ENCODE measurements at regions of chr1 and their contacts with region 1.

Region 1: GRCh38 chr1:26472901-26473845 is 933 bp downstream of the HMGN2 start:
- DNase-seq: peak; percentile 96
- H3K4me3 ChIP-seq: peak overlapping the region; percentile 96
- H3K27ac ChIP-seq: peak overlapping the region; percentile 95
- H3K4me1 ChIP-seq: peaks cover 61% of the 10 kb centered on the region
- CTCF ChIP-seq: no peak

Region 2: DNA sequence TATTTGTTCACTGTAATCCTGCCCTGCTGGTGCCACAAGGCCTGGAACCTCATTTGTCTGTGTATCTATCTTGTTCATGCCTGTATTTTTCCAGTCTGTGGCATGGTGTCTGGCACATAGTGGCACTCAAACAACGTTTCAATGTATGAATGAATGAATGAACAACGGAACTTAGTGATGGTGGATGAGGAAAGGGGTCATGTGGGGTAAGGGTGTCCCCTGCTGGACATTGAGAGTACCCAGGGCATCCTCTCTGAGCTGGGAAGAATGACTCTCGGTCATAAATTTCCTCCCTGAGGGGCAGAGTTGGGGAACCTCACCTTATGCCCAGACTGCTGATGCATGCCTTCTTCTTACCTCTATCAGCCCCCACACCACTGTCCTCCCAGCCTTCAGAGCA is 81.7 kb before region 1 on chr1:
- CTCF ChIA-PET with region 1: no interaction called
- POLR2A ChIA-PET with region 1: no interaction called
- intact Hi-C with region 1: no loop called
- DNase-seq: peak; percentile 40
- H3K4me3 ChIP-seq: no peak overlapping the region
- H3K27ac ChIP-seq: no peak overlapping the region
- H3K4me1 ChIP-seq: no peaks in the 10 kb centered on the region
- CTCF ChIP-seq: peak; percentile 69

Region 3: GRCh38 chr1:26408604-26409003 is 64.6 kb before region 1 on chr1:
- CTCF ChIA-PET with region 1: no interaction called
- POLR2A ChIA-PET with region 1: no interaction called
- intact Hi-C with region 1: no loop called
- DNase-seq: peak; percentile 49
- H3K4me3 ChIP-seq: no peak overlapping the region
- H3K27ac ChIP-seq: no peak overlapping the region
- H3K4me1 ChIP-seq: peaks cover 15% of the 10 kb centered on the region
- CTCF ChIP-seq: no peak

Region 4: DNA sequence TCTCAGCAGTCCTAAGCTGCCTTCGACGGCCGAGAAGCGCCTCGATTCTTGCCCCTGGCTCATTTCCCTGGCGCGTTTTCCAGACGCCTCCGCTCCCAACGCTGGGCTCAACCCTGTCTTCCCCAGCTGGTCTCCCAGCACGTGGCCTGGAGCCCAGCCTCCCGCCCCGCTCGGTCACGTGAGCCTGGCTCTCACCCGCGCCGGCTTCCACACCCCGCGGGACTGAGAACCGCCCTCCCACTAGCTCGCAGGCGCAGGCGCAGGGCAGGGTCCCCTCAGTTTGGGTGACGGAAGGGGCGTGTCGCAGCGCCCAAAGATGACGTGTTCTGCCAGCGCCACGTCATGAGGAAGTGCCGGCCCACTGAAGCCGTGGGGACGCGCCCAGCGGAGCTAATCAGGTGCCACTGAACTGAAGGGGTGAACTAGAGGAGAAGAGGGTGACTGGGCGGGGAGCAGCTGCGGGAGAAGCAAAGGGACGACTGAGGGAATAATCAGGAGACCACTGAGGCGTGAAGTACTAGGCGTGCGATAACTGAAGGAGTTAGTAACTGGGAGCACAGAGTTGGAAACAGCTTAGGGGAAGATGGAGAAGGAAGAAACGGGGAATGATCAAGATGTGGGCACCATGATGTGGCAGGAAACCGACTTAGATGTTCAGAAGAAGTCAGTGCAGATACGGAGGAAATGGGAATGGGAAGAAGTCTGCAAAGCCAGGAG is 41.0 kb before region 1 on chr1 and contains the start of gene DHDDS:
- CTCF ChIA-PET with region 1: no interaction called
- POLR2A ChIA-PET with region 1: interaction called, 5 read pairs
- intact Hi-C with region 1: loop called (anchors 2 kb)
- DNase-seq: peak; percentile 98
- H3K4me3 ChIP-seq: peak within 1 kb of the TSS; percentile 89
- H3K27ac ChIP-seq: peak within 1 kb of the TSS; percentile 38
- H3K4me1 ChIP-seq: peaks cover 33% of the 10 kb centered on the region
- CTCF ChIP-seq: no peak
- total RNA-seq, gene DHDDS: 33.2 and 39.0 TPM in 2 replicates

Region 5: DNA sequence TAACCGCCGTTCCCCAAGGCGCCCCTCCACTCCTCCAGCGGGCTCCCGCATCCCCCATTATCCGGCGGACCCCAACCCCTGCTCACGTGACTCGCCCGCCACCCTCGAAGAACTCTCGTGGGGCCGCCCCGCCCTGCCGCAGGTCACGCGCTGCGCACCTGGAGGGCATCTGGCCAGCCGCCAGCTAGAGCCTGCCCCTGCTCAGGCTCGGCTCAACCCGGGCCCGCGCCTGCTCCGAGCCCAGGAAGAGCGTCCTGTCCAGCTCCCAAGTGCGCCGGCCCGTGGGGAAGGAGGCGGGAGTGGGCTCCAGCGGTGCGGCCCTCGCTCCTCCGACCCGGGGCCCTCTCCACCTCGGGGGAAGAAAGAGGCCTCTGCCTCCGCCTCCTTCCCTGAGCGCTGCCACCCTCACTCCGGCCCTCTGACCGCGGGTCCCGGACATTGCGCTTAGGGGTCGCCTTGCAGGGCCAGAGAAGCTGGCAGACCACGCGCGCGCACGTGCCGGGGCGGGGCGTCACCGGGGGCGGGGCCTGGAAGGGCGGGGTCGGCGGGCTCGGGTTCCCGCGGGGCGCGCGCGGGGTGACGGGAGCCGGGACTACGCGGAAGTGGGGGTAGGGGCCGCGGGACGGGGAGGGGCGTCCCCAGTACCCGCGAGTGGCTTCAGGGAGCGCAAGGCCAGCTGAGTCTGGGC is 27.5 kb after region 1 on chr1:
- CTCF ChIA-PET with region 1: no interaction called
- POLR2A ChIA-PET with region 1: interaction called, 5 read pairs
- intact Hi-C with region 1: loop called (anchors 1 kb)
- DNase-seq: peak; percentile 90
- H3K4me3 ChIP-seq: peak overlapping the region; percentile 75
- H3K27ac ChIP-seq: peak overlapping the region; percentile 84
- H3K4me1 ChIP-seq: peaks cover 25% of the 10 kb centered on the region
- CTCF ChIP-seq: peak; percentile 51; the same call in 1 of the 2 replicates

Region 6: GRCh38 chr1:26529655-26530409 is 56.7 kb after region 1 on chr1 and contains the start of gene RPS6KA1:
- CTCF ChIA-PET with region 1: no interaction called
- POLR2A ChIA-PET with region 1: no interaction called
- intact Hi-C with region 1: loop called (anchors 2 kb)
- DNase-seq: peak; percentile 81
- H3K4me3 ChIP-seq: peak within 1 kb of the TSS; percentile 93
- H3K27ac ChIP-seq: peak within 1 kb of the TSS; percentile 55
- H3K4me1 ChIP-seq: peaks cover 43% of the 10 kb centered on the region
- CTCF ChIP-seq: no peak
- total RNA-seq, gene RPS6KA1: 54.1 and 72.2 TPM in 2 replicates

Region 7: DNA sequence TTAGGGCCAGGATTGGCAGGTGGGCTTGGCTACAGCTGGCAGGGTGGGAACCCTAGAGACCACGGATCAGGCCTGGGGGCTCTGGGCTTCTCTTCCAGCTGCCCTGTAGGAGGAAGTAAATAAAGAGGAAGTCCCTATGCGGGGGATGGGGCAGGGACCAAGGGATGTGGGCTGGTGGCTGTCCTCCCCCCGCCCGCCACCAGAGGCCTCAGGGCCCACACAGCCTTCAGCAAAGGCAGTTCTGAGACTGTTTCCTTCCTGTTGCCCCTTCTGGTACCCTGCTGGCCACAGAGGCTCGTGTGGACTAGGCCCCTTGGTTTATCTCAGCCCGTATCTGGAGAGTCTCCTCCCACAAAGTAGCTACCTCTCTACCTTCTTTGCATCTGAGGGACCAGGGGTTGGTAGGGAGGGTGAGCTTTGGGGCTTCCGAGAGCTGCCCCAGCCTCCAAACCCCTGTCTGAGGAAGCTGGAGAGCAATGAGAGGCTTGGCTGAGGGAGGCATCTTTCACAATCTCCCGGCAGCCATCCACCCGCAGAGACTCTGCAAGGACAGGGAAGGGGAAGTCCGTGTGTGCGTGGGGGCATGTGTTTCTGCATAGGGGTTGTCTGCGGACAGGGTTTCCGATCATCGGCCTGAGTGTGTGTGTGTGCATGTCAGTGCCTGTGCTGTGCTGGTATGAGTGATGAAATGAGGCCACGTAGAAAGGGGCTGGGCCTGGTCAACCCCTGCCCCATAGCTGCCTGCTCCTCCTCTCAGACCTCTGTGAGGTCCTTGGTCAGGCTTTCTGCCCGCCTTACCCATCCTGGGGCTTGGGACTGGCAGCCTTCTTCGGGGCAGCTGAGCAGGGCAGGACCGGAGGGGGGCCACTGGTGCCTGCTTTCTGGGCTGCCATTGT is 68.9 kb after region 1 on chr1:
- CTCF ChIA-PET with region 1: no interaction called
- POLR2A ChIA-PET with region 1: no interaction called
- intact Hi-C with region 1: loop called (anchors 2 kb)
- DNase-seq: peak; percentile 95
- H3K4me3 ChIP-seq: peak overlapping the region; percentile 64
- H3K27ac ChIP-seq: peak overlapping the region; percentile 97
- H3K4me1 ChIP-seq: peaks cover 97% of the 10 kb centered on the region
- CTCF ChIP-seq: peak; percentile 72

Region 8: DNA sequence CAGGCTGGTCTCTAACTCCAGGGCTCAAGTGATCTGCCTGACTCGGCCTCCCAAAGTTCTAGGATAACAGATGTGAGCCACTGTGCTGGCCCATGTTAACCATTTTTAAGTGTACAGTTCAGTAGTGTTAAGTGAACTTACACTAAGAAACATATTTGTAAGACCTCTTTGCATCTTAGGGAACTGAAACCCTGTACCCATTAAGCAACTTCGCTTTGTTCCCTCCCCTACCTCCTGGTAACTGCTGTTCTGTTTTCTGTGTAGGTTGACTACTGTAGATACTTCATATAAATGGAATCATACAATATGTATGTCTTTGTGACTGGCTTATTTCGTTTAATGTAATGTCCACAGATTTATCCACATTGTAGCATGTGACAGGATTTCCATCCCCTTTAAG is 459.4 kb after region 1 on chr1:
- CTCF ChIA-PET with region 1: no interaction called
- POLR2A ChIA-PET with region 1: no interaction called
- intact Hi-C with region 1: no loop called
- DNase-seq: peak; percentile 72
- H3K4me3 ChIP-seq: no peak overlapping the region
- H3K27ac ChIP-seq: peak overlapping the region; percentile 55
- H3K4me1 ChIP-seq: peaks cover 12% of the 10 kb centered on the region
- CTCF ChIP-seq: no peak